Aorta (tissue), 5 donors: ENCODE measurements at regions of chrX and their contacts with region 1.

Region 1: DNA sequence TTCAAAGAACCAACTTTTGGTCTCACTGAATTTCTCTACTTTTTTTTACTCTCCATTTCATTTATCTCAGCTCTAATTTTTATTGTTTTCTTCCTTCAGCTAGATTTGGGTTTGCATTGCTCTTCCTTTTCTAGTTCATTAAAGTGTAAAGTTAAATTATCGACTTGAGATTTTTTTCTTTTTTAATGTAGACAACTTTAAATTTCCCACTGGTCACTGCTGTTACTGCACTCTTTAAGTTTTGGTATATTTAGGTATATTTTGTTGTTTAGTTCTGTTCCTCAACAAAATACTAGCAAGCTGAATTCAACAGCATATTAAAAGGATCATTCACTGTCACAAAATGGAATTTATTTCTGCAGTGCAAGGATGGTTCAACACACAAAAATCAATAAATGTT is 572.0 kb upstream of the DIAPH2 start:
- DNase-seq: no peak
- ATAC-seq: no peak
- H3K4me3 ChIP-seq: no peak overlapping the region
- H3K27ac ChIP-seq: no peak overlapping the region
- H3K4me1 ChIP-seq: no peaks in the 10 kb centered on the region
- H3K27me3 ChIP-seq: no peaks in the 10 kb centered on the region

Region 2: DNA sequence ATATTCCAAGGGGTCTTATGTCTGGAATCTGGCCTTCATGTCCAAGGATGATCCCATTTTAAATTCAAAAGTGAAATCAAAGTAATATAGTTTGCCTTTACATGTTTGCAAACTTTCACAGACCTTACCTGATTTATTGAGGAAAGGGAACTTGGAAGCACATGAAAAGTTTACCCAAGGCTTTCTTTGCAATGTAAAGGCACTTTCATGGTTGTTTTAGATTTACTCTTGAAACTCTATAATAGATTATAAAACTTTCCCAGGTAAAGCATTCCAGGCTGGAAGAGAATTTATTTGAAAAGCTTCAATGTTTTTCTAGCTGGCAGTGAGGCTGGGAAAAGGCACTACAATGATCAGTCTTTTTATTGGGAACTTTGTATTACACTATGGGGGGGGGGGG is 270.8 kb before region 1 on chrX:
- intact Hi-C with region 1: loop called in 1 of 2 experiments (anchors 10 kb)
- DNase-seq: no peak
- ATAC-seq: no peak
- H3K4me3 ChIP-seq: no peak overlapping the region
- H3K27ac ChIP-seq: no peak overlapping the region
- H3K4me1 ChIP-seq: no peaks in the 10 kb centered on the region
- H3K27me3 ChIP-seq: no peaks in the 10 kb centered on the region

Region 3: DNA sequence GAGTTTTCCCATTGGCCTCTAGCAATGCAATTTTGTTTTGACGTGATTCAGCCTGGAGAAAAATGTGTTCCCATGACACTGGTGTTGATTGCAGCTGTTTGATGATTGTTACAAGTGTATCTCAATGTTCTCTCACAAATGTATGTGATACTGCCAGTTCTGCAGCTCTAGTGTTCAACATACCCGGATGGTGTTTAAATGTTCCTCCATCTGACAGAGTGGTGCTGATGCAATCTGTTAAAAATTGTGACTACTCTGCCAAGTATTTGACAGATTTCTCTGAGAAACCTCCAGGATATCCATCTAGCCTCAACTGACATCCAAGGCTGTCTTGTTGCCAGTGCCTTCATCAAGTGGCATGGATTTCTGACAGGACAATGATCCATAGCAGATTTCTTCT is 85.3 kb before region 1 on chrX:
- intact Hi-C with region 1: no loop called
- DNase-seq: no peak
- ATAC-seq: no peak
- H3K4me3 ChIP-seq: no peak overlapping the region
- H3K27ac ChIP-seq: no peak overlapping the region
- H3K4me1 ChIP-seq: no peaks in the 10 kb centered on the region
- H3K27me3 ChIP-seq: no peaks in the 10 kb centered on the region